ENCODE measurements at regions of chr16 and their contacts with region 1.

Region 1: GRCh38 chr16:88856828-88857733 is at the starts of genes GALNS and TRAPPC2L:
- DNase-seq: peak; percentile 97 to 99 (median 98)
- ATAC-seq: peak; percentile 90
- H3K4me3 ChIP-seq: peak within 1 kb of the TSS; percentile 100
- H3K4me3 Mint-ChIP-seq: peak within 1 kb of the TSS; percentile 100
- H3K27ac ChIP-seq: peak within 1 kb of the TSS; percentile 69 to 74
- H3K27ac Mint-ChIP-seq: peak within 1 kb of the TSS; percentile 99
- H3K4me1 ChIP-seq: peaks cover 47% of the 10 kb centered on the region
- H3K4me1 Mint-ChIP-seq: peaks cover 27% of the 10 kb centered on the region
- H3K27me3 ChIP-seq: no peaks in the 10 kb centered on the region
- H3K27me3 Mint-ChIP-seq: peaks cover 3% of the 10 kb centered on the region
- CTCF ChIP-seq: no peak
- total RNA-seq, gene GALNS: 18.4 to 19.7 TPM
- total RNA-seq, gene TRAPPC2L: 48.0 to 48.2 TPM

Region 2: DNA sequence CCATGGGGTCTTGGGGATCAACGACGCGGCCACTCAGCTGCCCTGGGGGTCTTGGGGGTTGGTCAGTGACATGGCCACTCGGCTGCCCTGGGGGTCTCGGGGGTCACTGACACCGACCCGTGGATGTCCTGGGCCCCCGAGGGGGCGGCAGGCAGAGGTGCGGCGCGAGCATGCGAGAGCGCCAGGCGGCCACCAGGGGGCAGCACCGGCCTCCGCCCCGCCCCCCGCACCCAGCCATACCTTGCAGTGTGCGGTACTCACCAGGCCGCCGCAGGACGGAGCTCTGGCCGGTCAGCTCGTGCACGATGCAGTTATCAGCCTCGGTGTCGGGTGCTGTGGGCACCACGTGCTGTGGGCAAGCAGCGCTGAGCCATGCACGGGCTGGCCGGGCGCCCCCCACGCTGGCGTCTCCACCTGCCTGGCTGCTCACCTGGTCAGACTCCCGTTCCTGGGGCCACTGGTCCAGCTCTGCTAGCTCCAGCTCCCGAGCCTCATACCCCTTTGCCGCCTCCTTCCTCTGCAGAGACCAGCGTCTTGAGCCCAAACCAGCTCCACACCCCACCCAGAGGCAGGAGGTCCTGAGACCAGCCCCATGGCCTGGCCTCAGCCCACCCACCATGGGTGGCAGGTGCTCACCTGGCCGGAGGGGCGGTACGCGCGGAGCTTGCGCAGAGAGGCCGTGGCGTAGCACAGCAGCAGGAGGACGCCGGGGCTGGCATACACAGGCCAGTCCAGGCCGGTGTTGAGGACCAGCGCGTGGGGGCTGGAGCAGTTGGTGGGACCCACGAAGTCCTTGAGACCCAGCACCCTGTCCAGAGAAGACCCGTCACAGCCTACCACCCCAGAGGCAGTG is 119.6 kb before region 1 on chr16:
- CTCF ChIA-PET with region 1: interaction called, 14 read pairs
- POLR2A ChIA-PET with region 1: interaction called, 11 read pairs
- intact Hi-C with region 1: loop called (anchors 2 to 5 kb)
- DNase-seq: peak; percentile 44 to 89 (median 72)
- ATAC-seq: peak; percentile 98
- H3K4me3 ChIP-seq: no peak overlapping the region
- H3K4me3 Mint-ChIP-seq: no peak overlapping the region
- H3K27ac ChIP-seq: no peak overlapping the region
- H3K27ac Mint-ChIP-seq: no peak overlapping the region
- H3K4me1 ChIP-seq: peaks cover 15% of the 10 kb centered on the region
- H3K4me1 Mint-ChIP-seq: no peaks in the 10 kb centered on the region
- H3K27me3 ChIP-seq: no peaks in the 10 kb centered on the region
- H3K27me3 Mint-ChIP-seq: no peaks in the 10 kb centered on the region
- CTCF ChIP-seq: peak; percentile 98

Region 3: DNA sequence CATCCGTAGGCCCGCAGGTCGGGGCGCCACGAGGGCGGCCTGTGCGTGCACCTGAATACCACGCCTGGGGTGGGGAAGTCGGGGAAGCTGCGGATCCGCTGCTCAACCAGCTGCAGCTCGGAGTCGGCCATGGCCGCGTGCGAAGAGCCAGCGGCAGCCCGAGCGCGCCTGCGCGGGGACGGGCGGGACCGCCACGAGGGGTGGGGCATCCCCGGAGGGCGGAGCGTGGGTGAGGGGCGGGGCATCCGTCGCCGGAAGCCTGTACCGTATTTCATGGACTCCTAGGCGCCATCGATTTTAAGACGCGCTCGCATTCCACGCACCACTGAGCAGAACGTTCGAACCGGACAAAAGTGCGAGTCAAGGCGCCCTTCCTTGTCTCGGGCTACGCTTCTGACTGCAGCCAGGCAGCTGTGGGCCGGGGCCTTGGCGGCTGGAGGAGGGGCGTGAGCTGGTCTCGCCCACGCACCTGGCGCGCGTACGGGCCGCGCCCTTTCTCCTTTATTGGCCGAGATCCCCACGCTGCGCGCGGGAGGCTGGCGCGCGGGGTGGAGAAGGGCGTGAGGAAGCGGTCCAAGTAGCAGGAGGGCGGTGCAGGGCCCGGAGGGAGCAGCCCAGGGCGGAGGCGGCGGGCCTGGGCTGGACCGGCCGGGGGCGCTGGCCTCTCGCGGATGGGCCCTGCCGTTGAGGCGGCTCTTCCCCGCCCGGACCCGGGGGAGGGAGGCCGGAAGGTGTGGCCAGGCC is 45.1 kb before region 1 on chr16 and contains the start of gene APRT:
- CTCF ChIA-PET with region 1: interaction called, 19 read pairs
- POLR2A ChIA-PET with region 1: interaction called, 67 read pairs
- intact Hi-C with region 1: loop called (anchors 1 kb)
- DNase-seq: peak; percentile 93 to 99 (median 98)
- ATAC-seq: peak; percentile 90
- H3K4me3 ChIP-seq: peak within 1 kb of the TSS; percentile 75
- H3K4me3 Mint-ChIP-seq: peak within 1 kb of the TSS; percentile 99
- H3K27ac ChIP-seq: peak within 1 kb of the TSS; percentile 64 to 70
- H3K27ac Mint-ChIP-seq: peak within 1 kb of the TSS; percentile 95
- H3K4me1 ChIP-seq: peaks cover 29% of the 10 kb centered on the region
- H3K4me1 Mint-ChIP-seq: peaks cover 4% of the 10 kb centered on the region
- H3K27me3 ChIP-seq: no peaks in the 10 kb centered on the region
- H3K27me3 Mint-ChIP-seq: no peaks in the 10 kb centered on the region
- CTCF ChIP-seq: no peak
- total RNA-seq, gene APRT: 153 to 154 TPM

Region 4: GRCh38 chr16:89115216-89115861 is 258.3 kb after region 1 on chr16:
- CTCF ChIA-PET with region 1: no interaction called
- POLR2A ChIA-PET with region 1: interaction called, 11 read pairs
- intact Hi-C with region 1: loop called in 1 of 2 experiments (anchors 5 kb)
- DNase-seq: peak in 13 of 14 experiments; percentile 85 to 97 (median 89)
- ATAC-seq: peak; percentile 82
- H3K4me3 ChIP-seq: peak overlapping the region; percentile 56
- H3K4me3 Mint-ChIP-seq: peak overlapping the region; percentile 77
- H3K27ac ChIP-seq: peak overlapping the region; percentile 72 to 79
- H3K27ac Mint-ChIP-seq: no peak overlapping the region
- H3K4me1 ChIP-seq: peaks cover 75% of the 10 kb centered on the region
- H3K4me1 Mint-ChIP-seq: peaks cover 54% of the 10 kb centered on the region
- H3K27me3 ChIP-seq: no peaks in the 10 kb centered on the region
- H3K27me3 Mint-ChIP-seq: no peaks in the 10 kb centered on the region
- CTCF ChIP-seq: no peak

Region 5: GRCh38 chr16:89268987-89269735 is 412.1 kb after region 1 on chr16:
- CTCF ChIA-PET with region 1: no interaction called
- POLR2A ChIA-PET with region 1: no interaction called
- intact Hi-C with region 1: no loop called
- DNase-seq: no peak
- ATAC-seq: no peak
- H3K4me3 ChIP-seq: no peak overlapping the region
- H3K4me3 Mint-ChIP-seq: no peak overlapping the region
- H3K27ac ChIP-seq: no peak overlapping the region
- H3K27ac Mint-ChIP-seq: no peak overlapping the region
- H3K4me1 ChIP-seq: no peaks in the 10 kb centered on the region
- H3K4me1 Mint-ChIP-seq: no peaks in the 10 kb centered on the region
- H3K27me3 ChIP-seq: no peaks in the 10 kb centered on the region
- H3K27me3 Mint-ChIP-seq: no peaks in the 10 kb centered on the region
- CTCF ChIP-seq: no peak

Region 6: GRCh38 chr16:89657442-89658220 is 800.5 kb after region 1 on chr16 and contains the starts of genes CHMP1A and SPATA33:
- CTCF ChIA-PET with region 1: no interaction called
- POLR2A ChIA-PET with region 1: no interaction called
- intact Hi-C with region 1: loop called in 1 of 2 experiments (anchors 5 kb)
- DNase-seq: peak; percentile 82 to 97 (median 92)
- ATAC-seq: peak; percentile 88
- H3K4me3 ChIP-seq: peak within 1 kb of the TSS; percentile 91
- H3K4me3 Mint-ChIP-seq: peak within 1 kb of the TSS; percentile 93
- H3K27ac ChIP-seq: peak within 1 kb of the TSS; percentile 55 to 81
- H3K27ac Mint-ChIP-seq: peak within 1 kb of the TSS; percentile 81
- H3K4me1 ChIP-seq: peaks cover 34% of the 10 kb centered on the region
- H3K4me1 Mint-ChIP-seq: peaks cover 34% of the 10 kb centered on the region
- H3K27me3 ChIP-seq: no peaks in the 10 kb centered on the region
- H3K27me3 Mint-ChIP-seq: no peaks in the 10 kb centered on the region
- CTCF ChIP-seq: no peak
- total RNA-seq, gene CHMP1A: 54.7 to 55.9 TPM
- total RNA-seq, gene SPATA33: 4.4 to 7.1 TPM

Measured in CD4-positive, alpha-beta T cell (primary cell).